Mammary epithelial cell (primary cell): ENCODE measurements at regions of chr11 and their contacts with region 1.

Region 1: GRCh38 chr11:27910186-27910931 is 197.6 kb downstream of the KIF18A start:
- DNase-seq: peak; percentile 76
- H3K4me3 ChIP-seq: no peak overlapping the region
- H3K27ac ChIP-seq: no peak overlapping the region
- H3K4me1 ChIP-seq: peaks cover 16% of the 10 kb centered on the region
- H3K27me3 ChIP-seq: no peaks in the 10 kb centered on the region
- CTCF ChIP-seq: no peak

Region 2: GRCh38 chr11:28195449-28195848 is 285.1 kb after region 1 on chr11:
- CTCF ChIA-PET with region 1: no interaction called
- dilution Hi-C with region 1: no loop called
- in situ Hi-C with region 1: no loop called
- intact Hi-C with region 1: no loop called
- DNase-seq: no peak
- H3K4me3 ChIP-seq: no peak overlapping the region
- H3K27ac ChIP-seq: no peak overlapping the region
- H3K4me1 ChIP-seq: no peaks in the 10 kb centered on the region
- H3K27me3 ChIP-seq: no peaks in the 10 kb centered on the region
- CTCF ChIP-seq: no peak

Region 3: GRCh38 chr11:28631148-28631547 is 720.8 kb after region 1 on chr11:
- CTCF ChIA-PET with region 1: interaction called, 12 read pairs
- dilution Hi-C with region 1: no loop called
- in situ Hi-C with region 1: no loop called
- intact Hi-C with region 1: no loop called
- DNase-seq: no peak
- H3K4me3 ChIP-seq: no peak overlapping the region
- H3K27ac ChIP-seq: no peak overlapping the region
- H3K4me1 ChIP-seq: peaks cover 19% of the 10 kb centered on the region
- H3K27me3 ChIP-seq: no peaks in the 10 kb centered on the region
- CTCF ChIP-seq: no peak